ENCODE measurements at regions of chr15 and their contacts with region 1.

Region 1: GRCh38 chr15:42273102-42273899 is at the starts of genes GANC and TMEM87A:
- DNase-seq: peak; percentile 83 to 98 (median 95)
- ATAC-seq: peak; percentile 91 to 93
- H3K4me3 Mint-ChIP-seq: peak within 1 kb of the TSS; percentile 90 to 100 (median 98)
- H3K27ac Mint-ChIP-seq: peak within 1 kb of the TSS; percentile 98 to 100 (median 100)
- H3K4me1 Mint-ChIP-seq: peaks cover 23 to 56% (median 50%) of the 10 kb centered on the region in 4 donors
- H3K27me3 Mint-ChIP-seq: no peaks in the 10 kb centered on the region
- polyA plus RNA-seq, gene GANC: 11.8 to 16.2 (median 12.7) TPM
- polyA plus RNA-seq, gene TMEM87A: 48.9 to 54.0 (median 53.4) TPM

Region 2: DNA sequence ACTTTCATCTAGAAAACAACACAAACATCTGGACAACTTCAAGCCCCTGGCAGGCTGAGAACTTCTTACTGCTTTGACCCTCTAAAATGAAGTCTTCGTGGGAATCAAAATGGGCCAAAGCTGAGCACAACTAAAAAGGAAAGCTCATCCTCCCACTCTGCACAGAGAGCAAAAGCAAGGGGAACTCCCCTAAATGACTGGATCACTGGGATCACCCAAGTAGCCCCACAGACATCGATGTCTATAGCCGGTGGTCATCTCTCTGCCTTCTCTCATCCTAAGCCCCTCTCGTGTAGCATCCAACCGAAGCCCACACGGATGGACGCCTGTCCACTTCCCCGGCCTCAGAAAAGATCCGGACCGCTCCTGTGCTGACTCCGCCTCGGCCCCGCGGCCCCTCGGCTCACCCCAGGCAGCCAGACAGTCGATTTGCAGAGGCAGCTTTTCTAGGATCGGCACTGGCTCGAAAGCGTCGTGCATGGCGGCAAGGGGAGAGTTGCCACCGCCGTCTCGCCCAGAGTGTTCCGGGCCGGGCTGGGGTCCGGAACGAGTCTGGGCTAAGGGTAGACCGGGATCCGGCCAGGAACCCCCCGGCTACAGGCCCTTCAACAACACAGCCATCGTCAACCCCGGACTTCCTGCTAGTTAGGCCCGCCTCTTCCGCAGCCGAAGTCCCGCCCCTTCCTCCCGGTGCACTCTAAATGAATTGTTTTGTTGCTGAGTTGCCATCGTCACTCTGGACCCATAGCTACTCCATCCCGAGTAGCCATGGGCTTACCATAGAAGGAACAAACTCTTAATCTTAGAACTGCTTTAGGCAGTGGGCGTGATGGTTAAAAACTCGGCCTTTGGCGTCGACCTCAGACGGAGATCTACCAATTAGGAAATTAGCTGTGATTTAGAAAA is 65.4 kb before region 1 on chr15 and contains the start of gene VPS39:
- POLR2A ChIA-PET with region 1: interaction called, 16 read pairs
- DNase-seq: peak; percentile 72 to 90 (median 78)
- ATAC-seq: peak; percentile 97
- H3K4me3 Mint-ChIP-seq: peak within 1 kb of the TSS; percentile 90 to 98 (median 96)
- H3K27ac Mint-ChIP-seq: peak within 1 kb of the TSS; percentile 85 to 99 (median 96)
- H3K4me1 Mint-ChIP-seq: peaks cover 20 to 47% (median 40%) of the 10 kb centered on the region in 4 donors
- H3K27me3 Mint-ChIP-seq: no peaks in the 10 kb centered on the region
- polyA plus RNA-seq, gene VPS39: 26.9 to 40.5 (median 29.9) TPM

Region 3: GRCh38 chr15:42239528-42240182 is 33.6 kb before region 1 on chr15:
- POLR2A ChIA-PET with region 1: no interaction called
- DNase-seq: no peak
- ATAC-seq: no peak
- H3K4me3 Mint-ChIP-seq: no peak overlapping the region
- H3K27ac Mint-ChIP-seq: peak overlapping the region in 3 of 10 donors; percentile 25 to 78 (median 27)
- H3K4me1 Mint-ChIP-seq: peaks cover 0 to 11% (median 8%) of the 10 kb centered on the region in 4 donors
- H3K27me3 Mint-ChIP-seq: no peaks in the 10 kb centered on the region

Region 4: GRCh38 chr15:42490671-42491544 is 217.6 kb after region 1 on chr15 and contains the start of gene ZNF106:
- POLR2A ChIA-PET with region 1: interaction called, 14 read pairs
- DNase-seq: peak; percentile 82 to 93 (median 87)
- ATAC-seq: peak; percentile 61 to 63
- H3K4me3 Mint-ChIP-seq: peak within 1 kb of the TSS; percentile 94 to 100 (median 99)
- H3K27ac Mint-ChIP-seq: peak within 1 kb of the TSS; percentile 98 to 100 (median 99)
- H3K4me1 Mint-ChIP-seq: peaks cover 32 to 65% (median 61%) of the 10 kb centered on the region in 4 donors
- H3K27me3 Mint-ChIP-seq: peaks cover 0 to 2% (median 0%) of the 10 kb centered on the region in 5 donors
- polyA plus RNA-seq, gene ZNF106: 26.8 to 38.2 (median 32.3) TPM